Left cardiac atrium (tissue), 4 donors: ENCODE measurements at regions of chr17 and their contacts with region 1.

Region 1: DNA sequence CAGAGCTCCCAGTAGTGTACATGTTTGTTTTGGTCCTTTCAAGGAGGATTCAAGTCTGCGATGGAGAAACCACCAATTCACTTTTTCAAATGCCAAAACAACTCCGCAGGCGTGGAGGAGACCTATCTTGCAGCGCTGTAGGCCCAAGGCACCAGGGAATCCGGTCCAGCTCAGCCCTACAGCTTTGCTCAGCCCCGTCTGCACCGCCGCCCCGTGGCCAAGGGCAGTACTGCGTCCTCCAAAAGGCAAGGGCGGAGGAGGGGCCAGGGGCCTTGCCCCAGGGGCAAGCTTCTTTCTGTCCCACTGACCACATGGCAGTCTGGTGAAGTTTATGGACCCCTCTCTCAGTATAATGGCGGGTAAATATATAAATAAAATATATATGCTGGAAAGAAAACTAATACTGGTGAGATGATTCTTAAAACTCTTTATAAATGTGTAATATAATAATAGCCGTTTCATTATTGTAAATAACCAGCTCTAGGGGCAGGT is 709 bp upstream of the CD300LG start:
- DNase-seq: peak; percentile 89
- ATAC-seq: peak; percentile 96 to 97

Region 2: DNA sequence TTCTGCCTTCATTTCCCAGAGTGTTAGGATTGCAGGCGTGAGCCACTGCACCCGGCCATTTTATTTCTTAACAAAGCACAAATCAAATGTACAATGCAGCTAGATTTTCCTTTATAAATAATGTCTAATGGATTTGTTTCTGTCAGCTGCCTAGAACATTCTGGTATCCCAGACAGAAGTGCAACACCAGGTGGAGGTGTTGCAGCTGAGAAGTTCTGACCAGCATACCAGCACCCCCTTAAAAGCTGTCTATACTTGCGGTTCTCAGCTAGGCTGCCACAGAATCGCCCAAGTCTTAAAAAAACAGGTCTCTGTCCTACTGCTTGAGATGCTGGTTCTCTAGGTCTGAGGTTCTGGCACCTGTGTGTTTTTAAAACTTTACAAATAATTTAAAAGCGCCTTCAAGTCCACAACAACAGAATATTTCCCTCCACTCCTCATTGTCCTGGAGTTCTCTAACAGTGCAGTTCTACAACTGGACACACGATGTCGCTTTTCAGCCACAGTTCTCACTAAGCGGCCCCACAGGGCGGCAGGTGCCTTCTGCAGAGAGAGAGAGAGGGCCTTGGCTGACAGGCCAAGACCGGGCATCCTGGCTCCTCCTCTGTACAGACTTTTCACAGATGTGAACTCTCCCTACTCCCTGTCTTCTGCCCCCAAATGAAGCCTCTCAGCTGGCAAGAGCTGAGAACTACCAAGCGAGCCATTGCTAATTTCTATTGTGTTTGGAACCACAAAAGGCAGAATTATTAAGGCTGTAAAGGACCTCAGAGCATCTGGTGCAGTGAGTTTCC is 152.0 kb before region 1 on chr17:
- intact Hi-C with region 1: loop called in 1 of 2 experiments (anchors 10 kb)
- DNase-seq: peak; percentile 73
- ATAC-seq: peak; percentile 81 to 83

Region 3: DNA sequence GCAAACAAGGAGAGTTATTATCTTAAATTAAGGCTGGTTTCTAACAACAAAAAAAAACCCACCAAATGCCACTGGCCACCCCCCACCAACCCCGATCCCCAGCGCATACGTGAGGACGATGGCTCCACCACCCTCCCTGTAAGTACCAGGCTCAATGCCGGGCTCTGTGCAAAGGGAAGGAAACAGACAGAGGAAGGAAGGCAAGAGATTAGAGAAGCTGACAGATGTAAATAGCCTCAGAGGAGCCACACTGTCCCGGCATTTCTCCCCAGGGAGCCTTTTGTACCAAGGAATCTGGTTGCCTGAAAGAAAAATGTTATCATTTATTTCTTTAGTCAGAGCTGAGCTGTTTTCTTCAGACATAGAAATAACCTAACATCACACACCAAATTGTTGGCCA is 100.7 kb before region 1 on chr17:
- intact Hi-C with region 1: no loop called
- DNase-seq: no peak
- ATAC-seq: peak in 1 of 2 donors; percentile 53

Region 4: DNA sequence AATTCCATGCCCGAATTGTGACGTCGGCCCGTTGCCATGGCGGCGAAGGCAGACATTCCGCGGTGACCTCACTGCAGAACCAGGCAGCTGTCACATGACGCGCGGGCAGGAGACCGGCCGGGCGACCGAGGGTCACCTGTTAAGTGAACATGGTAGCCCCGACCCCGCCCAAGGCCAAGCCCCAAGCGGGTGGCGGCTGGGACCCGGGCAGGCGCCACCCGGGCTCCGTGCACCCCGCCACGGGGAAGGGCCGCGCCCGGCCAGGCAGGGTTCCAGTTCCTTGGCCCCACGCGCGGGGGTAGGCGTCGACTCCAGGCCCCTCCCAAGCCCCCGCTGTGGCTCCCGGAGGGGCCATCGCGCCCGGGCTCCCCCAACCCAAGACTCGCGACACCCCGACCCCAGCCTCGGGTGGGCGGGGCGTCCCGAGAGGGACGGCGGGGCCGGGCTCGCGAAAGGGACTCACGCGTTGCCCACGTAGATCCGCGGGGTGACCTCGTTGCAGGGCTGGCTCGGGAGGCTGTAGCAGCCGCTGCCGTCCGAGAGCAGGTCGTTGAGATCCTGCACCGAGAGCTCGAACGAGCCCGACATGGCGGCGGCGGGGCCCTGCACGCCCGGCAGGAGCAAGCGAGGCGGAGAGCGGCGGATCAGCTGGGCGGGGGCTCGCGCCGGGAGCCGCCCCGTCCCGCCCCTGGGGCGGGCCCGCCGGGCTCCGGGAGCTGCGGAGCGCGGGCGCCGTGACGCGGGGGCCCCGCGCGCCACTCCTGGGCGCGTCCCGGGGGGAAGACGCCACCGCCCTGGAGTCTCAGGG is 67.7 kb before region 1 on chr17 and contains the start of gene DUSP3:
- intact Hi-C with region 1: loop called in 1 of 2 experiments (anchors 10 kb)
- DNase-seq: peak; percentile 97
- ATAC-seq: peak; percentile 96
- total RNA-seq, gene DUSP3: 149 to 204 TPM

Region 5: DNA sequence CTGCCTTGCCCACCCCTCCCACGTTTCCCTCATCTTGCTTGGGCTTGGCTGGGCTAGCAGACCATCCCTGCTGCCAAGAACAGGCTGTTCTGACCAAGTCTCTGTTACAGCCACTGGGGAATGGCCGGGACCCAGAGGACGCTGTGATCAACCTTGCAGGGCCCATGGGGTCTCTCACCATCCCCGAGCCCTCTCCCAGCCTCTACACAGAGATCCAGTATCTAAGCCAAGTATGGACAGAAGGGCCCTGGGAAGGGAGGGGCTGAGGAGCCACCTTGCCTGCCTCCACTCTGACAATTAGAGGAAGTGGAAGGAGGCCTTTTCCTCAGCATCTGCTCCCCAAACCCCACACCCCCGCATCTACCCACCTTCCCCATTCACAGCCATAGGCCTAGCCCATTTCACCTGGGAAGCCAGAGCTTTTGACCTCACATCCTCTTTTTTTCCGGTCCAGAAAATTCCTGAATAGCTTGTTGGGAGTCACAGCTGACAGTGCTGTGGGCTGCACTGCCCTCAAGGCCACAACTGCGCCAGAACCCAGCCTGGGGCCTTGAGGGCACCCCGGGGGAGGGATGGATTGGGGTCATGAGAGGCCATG is 14.9 kb after region 1 on chr17:
- intact Hi-C with region 1: no loop called
- DNase-seq: peak; percentile 57
- ATAC-seq: peak; percentile 72 to 73

Region 6: DNA sequence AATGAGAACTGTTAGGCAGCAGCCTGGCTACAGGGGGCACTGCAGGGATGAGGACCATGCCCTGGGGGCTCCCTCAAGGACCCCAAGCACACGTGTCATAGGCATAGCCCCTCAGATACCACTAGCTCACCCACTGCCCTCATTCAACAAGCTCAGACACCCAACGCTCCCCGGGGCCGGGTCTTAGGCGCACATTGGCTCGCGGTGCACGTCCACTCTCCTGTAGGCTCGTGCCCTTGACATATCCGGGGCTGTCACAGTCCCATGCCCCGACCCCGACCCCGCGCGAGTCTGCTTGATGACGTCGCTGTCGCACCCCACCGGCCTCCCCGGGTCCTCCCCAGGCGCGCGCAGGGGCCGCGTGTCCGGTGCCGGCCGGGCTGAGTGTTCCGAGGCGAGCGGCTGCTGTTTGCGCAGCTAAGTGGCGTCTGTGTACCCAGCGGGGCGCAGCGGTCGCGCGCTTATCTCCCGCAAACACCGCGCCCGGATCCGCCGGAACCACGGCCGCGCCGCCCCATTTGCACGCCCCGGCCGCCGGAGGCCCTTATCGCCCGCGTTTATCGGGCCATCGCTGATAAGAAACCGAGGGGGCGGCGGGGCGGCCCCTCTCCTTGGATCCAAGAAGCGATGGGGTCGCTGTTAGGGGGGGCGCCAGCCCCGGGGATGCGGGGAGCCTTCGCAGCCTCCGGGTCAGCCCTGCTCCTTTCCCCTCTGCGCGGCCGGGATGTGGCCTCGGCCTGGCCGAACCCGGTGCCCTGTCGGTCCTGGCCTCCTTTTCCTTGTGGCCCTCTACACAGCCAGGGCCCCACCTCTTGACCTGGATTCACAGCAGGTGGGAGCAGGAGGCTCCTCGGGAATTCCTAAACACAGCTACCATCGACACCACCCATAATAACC is 137.5 kb after region 1 on chr17:
- intact Hi-C with region 1: no loop called
- DNase-seq: peak; percentile 33
- ATAC-seq: peak; percentile 62 to 66